ENCODE measurements at regions of chr2 and their contacts with region 1.

Region 1: DNA sequence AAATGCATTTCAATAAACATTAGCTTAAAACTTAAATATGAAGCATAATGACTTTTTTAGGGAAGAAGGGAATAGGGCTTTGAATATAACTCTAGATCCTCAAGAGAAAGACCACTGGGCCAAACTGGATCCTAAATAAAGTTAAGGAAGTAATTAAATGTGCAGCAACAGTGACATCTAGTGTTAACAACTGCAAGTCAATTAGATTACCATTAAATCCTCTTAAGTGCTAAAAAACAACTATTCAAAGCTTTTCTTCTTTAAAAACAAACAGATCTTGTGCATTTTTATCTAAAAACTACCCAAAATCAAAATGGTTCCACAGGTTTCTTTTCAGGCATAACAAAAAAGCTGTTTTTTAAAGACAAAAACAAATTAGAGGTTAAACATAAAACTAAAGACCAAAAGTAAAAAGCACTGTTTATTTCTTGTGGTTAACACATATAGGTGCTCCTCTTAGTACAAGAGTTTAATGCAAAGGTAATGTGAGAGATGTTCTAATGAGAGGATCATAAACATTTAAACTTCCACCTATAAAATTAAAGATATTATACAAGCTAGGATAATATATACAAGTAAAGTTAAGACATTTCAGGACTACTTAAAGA is 111.4 kb downstream of the THADA start:
- DNase-seq: no peak
- ATAC-seq: peak; percentile 34
- H3K4me3 ChIP-seq: no peak overlapping the region
- H3K27ac ChIP-seq: no peak overlapping the region
- H3K4me1 ChIP-seq: peaks cover 22% of the 10 kb centered on the region
- H3K27me3 ChIP-seq: no peaks in the 10 kb centered on the region
- CTCF ChIP-seq: peak in 2 of 3 experiments; percentile 59 to 73; a peak in 5 of 6 replicates
- EP300 ChIP-seq: no peak
- POLR2A ChIP-seq: no peak
- RAD21 ChIP-seq: peak; percentile 76

Region 2: GRCh38 chr2:42464631-42465030 is 1019.8 kb before region 1 on chr2:
- CTCF ChIA-PET with region 1: no interaction called
- POLR2A ChIA-PET with region 1: no interaction called
- RAD21 ChIA-PET with region 1: no interaction called
- SMC1A ChIA-PET with region 1: no interaction called
- in situ Hi-C with region 1: no loop called
- intact Hi-C with region 1: no loop called
- DNase-seq: no peak
- ATAC-seq: no peak
- H3K4me3 ChIP-seq: no peak overlapping the region
- H3K27ac ChIP-seq: no peak overlapping the region
- H3K4me1 ChIP-seq: no peaks in the 10 kb centered on the region
- H3K27me3 ChIP-seq: peaks cover 0 to 2% of the 10 kb centered on the region in 2 experiments; a peak in 1 of 4 replicates
- CTCF ChIP-seq: no peak
- EP300 ChIP-seq: no peak
- POLR2A ChIP-seq: no peak
- RAD21 ChIP-seq: no peak

Region 3: DNA sequence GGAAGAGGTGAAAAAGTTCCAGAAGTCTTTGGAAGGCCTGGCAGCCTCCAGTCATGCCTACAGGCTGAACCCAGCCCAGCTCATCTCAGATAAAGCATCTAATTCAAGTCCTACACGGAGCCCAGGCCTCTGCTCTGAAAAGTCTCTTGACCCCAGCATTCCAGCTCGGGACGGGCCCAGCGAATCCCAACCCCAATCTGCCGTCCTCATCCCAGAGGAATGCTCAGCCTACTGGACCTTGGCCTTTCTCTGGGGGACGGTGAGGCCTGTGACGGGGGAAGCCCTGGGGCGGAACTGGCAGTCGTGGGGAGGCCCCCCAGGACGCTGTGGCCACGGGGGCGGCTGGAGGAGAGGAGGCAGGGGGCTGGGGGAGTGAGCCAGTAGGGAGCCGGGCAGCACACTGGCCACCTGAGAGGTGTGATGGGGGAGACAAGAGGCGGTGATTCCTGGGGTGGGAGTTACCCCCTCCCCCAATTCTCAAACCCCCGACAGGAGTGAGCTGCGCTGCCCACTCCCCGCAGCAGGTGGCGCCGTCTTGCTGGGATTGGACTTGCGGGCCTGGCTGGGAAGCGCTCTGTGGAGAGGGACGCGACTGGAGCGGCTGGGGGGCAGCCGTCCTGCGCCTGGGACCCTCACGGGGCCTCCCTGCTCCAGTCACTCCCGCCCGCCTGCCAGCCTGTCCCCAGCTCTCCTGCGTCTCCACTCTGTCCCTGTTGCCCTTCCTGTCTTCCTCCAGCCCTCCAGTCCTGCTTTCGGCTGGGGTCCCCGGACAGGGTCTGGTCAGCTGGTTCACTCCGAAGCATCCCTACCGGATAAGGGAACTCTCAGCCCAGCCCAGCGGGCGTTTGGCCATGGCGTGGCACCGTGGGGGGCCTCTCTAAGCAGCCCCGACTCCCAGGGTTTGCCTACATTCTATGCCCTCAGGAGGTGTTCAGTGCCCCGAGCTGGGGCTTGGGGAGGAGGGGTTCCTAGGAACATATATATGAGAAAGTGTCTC is 509.4 kb before region 1 on chr2:
- CTCF ChIA-PET with region 1: interaction called, 48 read pairs
- POLR2A ChIA-PET with region 1: no interaction called
- RAD21 ChIA-PET with region 1: interaction called, 35 read pairs
- SMC1A ChIA-PET with region 1: interaction called, 40 read pairs
- in situ Hi-C with region 1: no loop called
- intact Hi-C with region 1: loop called (anchors 10 kb)
- DNase-seq: no peak
- ATAC-seq: peak; percentile 67
- H3K4me3 ChIP-seq: no peak overlapping the region
- H3K27ac ChIP-seq: no peak overlapping the region
- H3K4me1 ChIP-seq: peaks cover 14% of the 10 kb centered on the region
- H3K27me3 ChIP-seq: peaks cover 0 to 1% of the 10 kb centered on the region in 2 experiments; a peak in 1 of 4 replicates
- CTCF ChIP-seq: peak; percentile 56 to 88 (median 83)
- EP300 ChIP-seq: no peak
- POLR2A ChIP-seq: no peak
- RAD21 ChIP-seq: peak; percentile 77

Region 4: DNA sequence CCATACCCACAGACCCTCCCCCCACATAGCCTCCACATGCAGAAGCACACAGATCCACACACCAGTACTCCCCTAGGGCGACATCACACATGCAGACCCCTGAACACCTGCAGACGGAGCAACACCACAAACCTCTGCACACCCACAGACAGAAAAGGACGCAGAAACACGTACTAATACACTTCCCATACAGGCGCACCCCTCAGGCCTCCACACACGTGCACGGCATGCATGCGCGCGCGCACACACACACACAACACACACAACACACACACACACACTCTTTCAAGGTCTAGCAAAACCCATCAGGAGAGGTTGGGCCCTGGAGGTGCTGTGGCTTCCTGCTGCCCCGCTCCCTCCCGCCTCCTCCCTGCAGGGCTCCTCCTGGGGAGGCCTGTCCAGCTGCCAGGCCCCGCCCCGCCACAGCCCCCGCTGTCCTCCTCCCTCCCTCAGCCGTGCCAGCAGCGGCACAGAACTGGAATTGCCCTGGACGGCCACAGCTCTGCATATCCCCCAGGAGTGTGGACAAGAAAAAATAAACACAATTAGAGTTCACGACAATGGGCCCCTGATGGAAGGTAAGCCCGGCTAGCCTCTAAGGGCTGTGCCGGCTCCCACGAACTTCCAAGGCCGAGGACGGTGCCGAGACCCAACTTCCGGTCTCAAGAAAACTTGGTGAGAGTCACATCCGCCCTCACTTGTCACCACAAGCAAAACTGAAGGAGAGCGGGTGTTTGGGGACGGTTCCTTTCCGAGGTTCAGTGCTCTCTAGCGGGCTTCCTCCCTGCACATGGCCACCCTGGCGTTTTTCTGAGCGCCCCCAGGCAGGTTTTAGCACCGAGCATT is 264.8 kb before region 1 on chr2:
- CTCF ChIA-PET with region 1: interaction called, 20 read pairs
- POLR2A ChIA-PET with region 1: interaction called, 5 read pairs
- RAD21 ChIA-PET with region 1: interaction called, 20 read pairs
- SMC1A ChIA-PET with region 1: interaction called, 30 read pairs
- in situ Hi-C with region 1: no loop called
- intact Hi-C with region 1: no loop called
- DNase-seq: peak; percentile 80
- ATAC-seq: peak; percentile 75
- H3K4me3 ChIP-seq: peak overlapping the region; percentile 81
- H3K27ac ChIP-seq: peak overlapping the region; percentile 88
- H3K4me1 ChIP-seq: peaks cover 31% of the 10 kb centered on the region
- H3K27me3 ChIP-seq: no peaks in the 10 kb centered on the region
- CTCF ChIP-seq: no peak; a peak in 1 of 6 replicates
- EP300 ChIP-seq: peak; percentile 32 to 46; a peak in 1 of 4 replicates
- POLR2A ChIP-seq: no peak
- RAD21 ChIP-seq: no peak

Region 5: GRCh38 chr2:43402452-43402944 is 81.9 kb before region 1 on chr2:
- CTCF ChIA-PET with region 1: interaction called, 42 read pairs
- POLR2A ChIA-PET with region 1: interaction called, 20 read pairs
- RAD21 ChIA-PET with region 1: interaction called, 112 read pairs
- SMC1A ChIA-PET with region 1: interaction called, 76 read pairs
- in situ Hi-C with region 1: loop called (anchors 5 kb)
- intact Hi-C with region 1: loop called (anchors 1 kb)
- DNase-seq: peak; percentile 79
- ATAC-seq: peak; percentile 73
- H3K4me3 ChIP-seq: peak overlapping the region; percentile 40
- H3K27ac ChIP-seq: peak overlapping the region; percentile 97
- H3K4me1 ChIP-seq: peaks cover 64% of the 10 kb centered on the region
- H3K27me3 ChIP-seq: no peaks in the 10 kb centered on the region
- CTCF ChIP-seq: no peak
- EP300 ChIP-seq: peak in 1 of 2 experiments; percentile 22; a peak in 1 of 4 replicates
- POLR2A ChIP-seq: peak; percentile 38
- RAD21 ChIP-seq: peak; percentile 34

Region 6: GRCh38 chr2:43472527-43473194 is 11.8 kb before region 1 on chr2:
- CTCF ChIA-PET with region 1: interaction called, 4 read pairs
- POLR2A ChIA-PET with region 1: no interaction called
- RAD21 ChIA-PET with region 1: interaction called, 5 read pairs
- SMC1A ChIA-PET with region 1: interaction called, 84 read pairs
- in situ Hi-C with region 1: no loop called
- intact Hi-C with region 1: no loop called
- DNase-seq: no peak
- ATAC-seq: no peak
- H3K4me3 ChIP-seq: no peak overlapping the region
- H3K27ac ChIP-seq: no peak overlapping the region
- H3K4me1 ChIP-seq: no peaks in the 10 kb centered on the region
- H3K27me3 ChIP-seq: no peaks in the 10 kb centered on the region
- CTCF ChIP-seq: no peak
- EP300 ChIP-seq: no peak
- POLR2A ChIP-seq: no peak
- RAD21 ChIP-seq: no peak

Region 7: GRCh38 chr2:43576981-43577892 is 92.8 kb after region 1 on chr2:
- CTCF ChIA-PET with region 1: interaction called, 45 read pairs
- POLR2A ChIA-PET with region 1: no interaction called
- RAD21 ChIA-PET with region 1: interaction called, 30 read pairs
- SMC1A ChIA-PET with region 1: interaction called, 13 read pairs
- in situ Hi-C with region 1: no loop called
- intact Hi-C with region 1: no loop called
- DNase-seq: no peak
- ATAC-seq: peak; percentile 45; the same call in 1 of the 3 replicates
- H3K4me3 ChIP-seq: no peak overlapping the region
- H3K27ac ChIP-seq: no peak overlapping the region
- H3K4me1 ChIP-seq: no peaks in the 10 kb centered on the region
- H3K27me3 ChIP-seq: no peaks in the 10 kb centered on the region
- CTCF ChIP-seq: peak; percentile 64 to 73 (median 70); a peak in 5 of 6 replicates
- EP300 ChIP-seq: no peak
- POLR2A ChIP-seq: no peak
- RAD21 ChIP-seq: peak; percentile 61

Measured in GM12878 (cell line).